ENCODE measurements at regions of chr2 and their contacts with region 1.

Region 1: GRCh38 chr2:133844214-133844892 is 276.1 kb upstream of the NCKAP5 start:
- DNase-seq: peak; percentile 66
- H3K4me3 ChIP-seq: no peak overlapping the region
- H3K27ac ChIP-seq: no peak overlapping the region
- H3K4me1 ChIP-seq: peaks cover 33% of the 10 kb centered on the region
- H3K27me3 ChIP-seq: no peaks in the 10 kb centered on the region
- CTCF ChIP-seq: peak; percentile 77 to 87
- POLR2A ChIP-seq: no peak

Region 2: GRCh38 chr2:132547074-132547687 is 1297.2 kb before region 1 on chr2:
- CTCF ChIA-PET with region 1: interaction called, 73 read pairs
- POLR2A ChIA-PET with region 1: no interaction called
- dilution Hi-C with region 1: no loop called
- intact Hi-C with region 1: no loop called
- DNase-seq: peak; percentile 56
- H3K4me3 ChIP-seq: no peak overlapping the region
- H3K27ac ChIP-seq: no peak overlapping the region
- H3K4me1 ChIP-seq: no peaks in the 10 kb centered on the region
- H3K27me3 ChIP-seq: no peaks in the 10 kb centered on the region
- CTCF ChIP-seq: peak; percentile 53 to 58
- POLR2A ChIP-seq: no peak

Region 3: DNA sequence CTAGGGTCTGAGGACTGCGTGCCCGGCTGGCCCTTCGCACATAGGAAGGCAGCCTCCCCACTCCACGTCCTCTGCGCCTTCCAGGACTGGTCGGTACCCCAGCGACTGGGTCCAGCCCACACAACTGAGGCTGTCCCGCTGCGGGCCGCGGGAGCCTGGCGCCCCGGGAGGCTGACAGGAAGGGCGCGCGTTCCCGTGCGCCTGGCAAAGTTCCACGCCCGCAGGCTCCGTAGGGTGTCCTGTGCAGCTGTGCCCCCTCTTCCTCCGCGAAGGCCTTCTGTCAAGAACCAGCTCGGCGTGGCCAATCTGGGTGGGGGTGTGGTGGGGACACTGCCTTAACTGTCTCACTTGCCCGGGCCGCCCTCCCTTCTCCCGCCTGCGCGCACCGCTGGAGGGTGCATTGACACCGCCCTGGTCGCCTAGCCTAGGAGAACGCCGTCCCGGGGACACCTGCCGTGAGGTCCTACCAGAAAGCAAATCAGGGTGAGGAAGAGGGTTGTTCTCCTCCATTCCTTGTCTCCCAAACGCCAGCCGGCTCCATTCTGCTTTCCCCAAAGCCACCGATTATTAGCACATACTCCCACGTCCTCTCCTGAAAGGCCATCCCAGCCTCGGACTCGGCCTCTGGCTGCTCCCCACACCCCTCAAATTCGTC is 1173.7 kb before region 1 on chr2:
- CTCF ChIA-PET with region 1: interaction called, 8 read pairs
- POLR2A ChIA-PET with region 1: no interaction called
- dilution Hi-C with region 1: no loop called
- intact Hi-C with region 1: loop called (anchors 1 kb)
- DNase-seq: peak; percentile 44
- H3K4me3 ChIP-seq: peak overlapping the region; percentile 55 to 76 (median 75)
- H3K27ac ChIP-seq: peak overlapping the region; percentile 69
- H3K4me1 ChIP-seq: peaks cover 30% of the 10 kb centered on the region
- H3K27me3 ChIP-seq: no peaks in the 10 kb centered on the region
- CTCF ChIP-seq: no peak
- POLR2A ChIP-seq: peak; percentile 54

Region 4: DNA sequence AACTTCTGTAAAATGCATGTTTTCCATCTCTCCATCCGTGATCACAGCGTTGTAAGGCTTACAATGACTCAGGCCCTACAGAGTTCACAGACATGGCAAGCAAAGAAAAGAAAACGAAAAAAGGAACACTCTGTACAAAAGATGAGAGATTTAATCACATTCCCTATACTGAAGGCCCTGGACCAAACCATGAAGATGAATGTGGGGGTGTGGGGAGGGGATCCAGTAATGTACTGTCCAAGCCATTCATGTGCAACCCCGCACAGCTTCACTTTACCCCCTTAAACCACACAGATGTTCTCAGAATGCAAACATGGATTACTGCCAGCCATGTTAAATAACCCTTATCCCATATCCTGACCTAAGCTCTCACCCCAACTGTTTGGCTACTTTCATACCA is 667.2 kb before region 1 on chr2:
- CTCF ChIA-PET with region 1: interaction called, 12 read pairs
- POLR2A ChIA-PET with region 1: no interaction called
- dilution Hi-C with region 1: no loop called
- intact Hi-C with region 1: no loop called
- DNase-seq: no peak
- H3K4me3 ChIP-seq: no peak overlapping the region
- H3K27ac ChIP-seq: no peak overlapping the region
- H3K4me1 ChIP-seq: no peaks in the 10 kb centered on the region
- H3K27me3 ChIP-seq: no peaks in the 10 kb centered on the region
- CTCF ChIP-seq: no peak
- POLR2A ChIP-seq: no peak

Region 5: GRCh38 chr2:133458280-133458679 is 386.1 kb before region 1 on chr2:
- CTCF ChIA-PET with region 1: no interaction called
- POLR2A ChIA-PET with region 1: no interaction called
- dilution Hi-C with region 1: no loop called
- intact Hi-C with region 1: loop called (anchors 10 kb)
- DNase-seq: peak; percentile 46
- H3K4me3 ChIP-seq: no peak overlapping the region
- H3K27ac ChIP-seq: no peak overlapping the region
- H3K4me1 ChIP-seq: peaks cover 3% of the 10 kb centered on the region
- H3K27me3 ChIP-seq: no peaks in the 10 kb centered on the region
- CTCF ChIP-seq: no peak
- POLR2A ChIP-seq: no peak

Region 6: DNA sequence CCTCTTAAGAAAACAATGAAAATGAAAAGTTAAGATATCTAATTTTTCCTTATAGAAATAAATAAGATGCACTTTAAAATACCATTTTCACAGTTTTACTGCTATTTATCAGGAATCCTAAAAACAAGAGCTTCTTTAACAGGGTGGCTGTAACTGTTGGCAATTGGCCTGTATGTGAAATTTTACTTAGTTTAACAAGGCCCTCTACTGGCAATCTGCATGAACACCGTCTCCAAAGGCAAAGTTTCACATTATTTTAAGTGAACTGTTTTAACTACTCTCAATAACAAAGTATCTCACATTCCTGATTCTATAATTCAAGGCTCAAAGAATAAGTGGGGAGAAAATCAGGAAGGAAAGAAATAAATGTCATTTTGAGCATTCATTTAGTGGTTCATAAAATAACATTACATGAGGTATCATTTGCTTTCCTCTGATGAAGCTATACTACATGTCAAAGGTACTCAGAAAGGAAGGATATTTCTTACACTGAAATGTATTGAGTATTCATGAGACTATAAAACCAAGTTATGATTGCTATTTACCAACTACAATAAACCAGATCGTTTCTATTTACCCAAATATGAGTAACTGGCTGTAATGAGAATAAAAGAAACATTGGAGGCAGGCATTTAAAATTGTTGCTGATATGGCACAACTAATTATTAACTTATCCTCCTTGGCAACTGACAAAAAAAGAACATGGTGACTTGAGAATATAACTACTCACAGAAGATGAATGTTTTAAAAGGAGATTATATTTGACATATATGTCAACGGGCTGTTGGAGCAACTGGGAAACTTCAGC is 283.1 kb before region 1 on chr2:
- CTCF ChIA-PET with region 1: interaction called, 43 read pairs
- POLR2A ChIA-PET with region 1: no interaction called
- dilution Hi-C with region 1: no loop called
- intact Hi-C with region 1: loop called (anchors 1 kb)
- DNase-seq: peak; percentile 74
- H3K4me3 ChIP-seq: no peak overlapping the region
- H3K27ac ChIP-seq: no peak overlapping the region
- H3K4me1 ChIP-seq: no peaks in the 10 kb centered on the region
- H3K27me3 ChIP-seq: no peaks in the 10 kb centered on the region
- CTCF ChIP-seq: peak; percentile 38 to 52
- POLR2A ChIP-seq: no peak

Region 7: DNA sequence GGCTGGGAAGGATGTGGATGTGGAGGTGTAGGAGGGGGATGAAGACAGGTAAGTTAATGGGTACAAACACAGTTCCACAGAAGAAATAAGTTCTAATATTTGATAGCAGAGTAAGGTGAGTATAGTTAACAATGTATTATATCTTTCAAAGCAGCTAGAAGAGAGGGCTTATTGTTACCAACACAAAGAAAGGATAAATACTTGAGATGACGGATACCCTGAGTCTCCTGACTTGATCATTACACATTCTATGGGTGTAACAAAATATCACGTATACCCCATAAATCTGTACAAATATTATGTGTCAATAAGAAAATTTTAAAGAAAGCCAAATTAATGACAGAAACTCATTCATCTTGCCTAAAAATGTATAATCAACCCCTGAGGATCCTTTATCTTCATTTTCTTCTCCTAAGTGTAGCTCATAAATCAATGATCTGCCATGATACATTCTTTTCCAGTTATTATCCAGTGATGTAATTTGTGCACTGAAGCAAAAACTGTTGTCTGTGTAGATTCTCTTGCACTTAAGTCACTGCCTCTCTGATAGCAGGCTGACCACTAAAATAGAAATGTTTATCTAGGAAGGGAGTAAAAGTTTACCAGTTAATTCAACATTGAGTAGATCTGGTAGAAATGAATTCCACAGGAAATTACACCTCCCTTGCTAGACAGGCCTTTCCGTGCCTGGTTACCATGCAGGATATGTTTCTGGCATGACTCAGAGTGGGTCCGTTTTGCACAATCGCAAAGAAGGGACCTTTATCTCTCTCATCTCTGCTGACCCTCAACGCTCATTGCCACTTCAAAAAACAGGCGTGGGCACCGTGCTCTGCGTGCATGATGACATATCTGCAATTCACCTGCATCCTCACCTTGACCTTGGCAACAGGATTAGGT is 26.4 kb before region 1 on chr2:
- CTCF ChIA-PET with region 1: interaction called, 10 read pairs
- POLR2A ChIA-PET with region 1: no interaction called
- dilution Hi-C with region 1: no loop called
- intact Hi-C with region 1: loop called (anchors 1 kb)
- DNase-seq: peak; percentile 98
- H3K4me3 ChIP-seq: no peak overlapping the region
- H3K27ac ChIP-seq: peak overlapping the region; percentile 98
- H3K4me1 ChIP-seq: peaks cover 88% of the 10 kb centered on the region
- H3K27me3 ChIP-seq: no peaks in the 10 kb centered on the region
- CTCF ChIP-seq: no peak
- POLR2A ChIP-seq: peak; percentile 57

Region 8: DNA sequence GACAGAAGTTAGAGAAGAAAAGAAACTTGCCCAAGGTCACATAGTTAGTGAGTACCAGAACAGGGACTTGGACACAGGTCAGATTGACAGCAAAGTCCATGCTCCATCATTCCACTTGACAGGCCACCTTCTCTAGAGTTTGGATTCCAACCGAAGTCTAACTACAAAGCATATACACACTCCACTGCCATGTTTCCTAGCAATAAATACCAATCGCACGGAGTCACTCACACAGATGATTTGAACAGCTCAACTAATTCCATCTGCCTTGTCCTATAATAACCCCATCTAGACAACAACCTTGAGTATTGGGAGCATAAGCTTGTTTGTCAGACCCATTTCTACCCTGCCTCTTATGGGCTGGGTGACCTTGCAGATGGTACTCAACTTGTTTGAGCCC is 74.9 kb after region 1 on chr2:
- CTCF ChIA-PET with region 1: no interaction called
- POLR2A ChIA-PET with region 1: no interaction called
- dilution Hi-C with region 1: no loop called
- intact Hi-C with region 1: no loop called
- DNase-seq: no peak
- H3K4me3 ChIP-seq: no peak overlapping the region
- H3K27ac ChIP-seq: no peak overlapping the region
- H3K4me1 ChIP-seq: no peaks in the 10 kb centered on the region
- H3K27me3 ChIP-seq: peaks cover 1 to 8% of the 10 kb centered on the region in 2 experiments
- CTCF ChIP-seq: no peak
- POLR2A ChIP-seq: no peak